Pancreas (tissue), 10 donors: ENCODE measurements at regions of chr10 and their contacts with region 1.

Region 1: GRCh38 chr10:29131952-29132820 is 156.7 kb upstream of the LYZL1 start:
- DNase-seq: peak in 2 of 6 donors; percentile 24
- ATAC-seq: peak in 3 of 4 donors; percentile 23 to 51 (median 43)
- H3K4me3 ChIP-seq: no peak overlapping the region
- H3K27ac ChIP-seq: no peak overlapping the region
- H3K4me1 ChIP-seq: no peaks in the 10 kb centered on the region
- H3K27me3 ChIP-seq: no peaks in the 10 kb centered on the region
- CTCF ChIP-seq: no peak

Region 2: DNA sequence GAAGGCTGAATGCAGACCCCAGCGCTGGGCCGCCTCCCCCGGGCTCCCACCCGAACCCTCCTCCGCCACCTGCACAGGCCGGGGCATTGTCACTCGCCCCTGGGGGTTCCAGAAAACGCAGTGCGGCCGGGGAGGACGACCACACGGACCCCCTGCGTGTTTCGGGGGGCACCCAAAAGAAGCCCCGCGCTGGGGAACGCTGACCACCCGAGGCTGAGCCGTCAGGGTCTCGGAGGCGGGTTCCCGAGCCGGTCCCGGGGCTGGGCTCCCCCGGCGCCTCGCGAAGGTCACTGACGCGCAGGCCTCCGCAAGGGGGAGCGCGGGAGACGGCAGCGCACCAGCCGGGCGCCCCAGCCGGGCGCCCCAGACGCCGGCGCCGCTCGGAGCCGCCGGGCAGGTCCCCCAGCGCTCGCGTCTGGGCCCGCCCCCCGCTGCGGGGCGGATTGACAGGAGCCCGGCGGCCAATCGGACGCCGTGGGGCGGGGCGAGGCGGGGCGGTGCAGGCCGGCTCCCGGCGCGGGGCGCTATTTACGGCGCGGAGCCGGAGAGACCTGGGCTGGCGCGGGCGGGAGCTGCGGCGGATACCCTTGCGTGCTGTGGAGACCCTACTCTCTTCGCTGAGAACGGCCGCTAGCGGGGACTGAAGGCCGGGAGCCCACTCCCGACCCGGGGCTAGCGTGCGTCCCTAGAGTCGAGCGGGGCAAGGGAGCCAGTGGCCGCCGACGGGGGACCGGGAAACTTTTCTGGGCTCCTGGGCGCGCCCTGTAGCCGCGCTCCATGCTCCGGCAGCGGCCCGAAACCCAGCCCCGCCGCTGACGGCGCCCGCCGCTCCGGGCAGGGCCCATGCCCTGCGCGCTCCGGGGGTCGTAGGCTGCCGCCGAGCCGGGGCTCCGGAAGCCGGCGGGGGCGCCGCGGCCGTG is 455.0 kb before region 1 on chr10 and contains the start of gene BAMBI:
- intact Hi-C with region 1: loop called in 1 of 3 experiments (anchors 5 kb)
- DNase-seq: peak; percentile 88 to 98 (median 93)
- ATAC-seq: peak; percentile 95 to 98 (median 98)
- H3K4me3 ChIP-seq: peak within 1 kb of the TSS; percentile 71 to 94 (median 82)
- H3K27ac ChIP-seq: peak within 1 kb of the TSS in 3 of 4 donors; percentile 68 to 79 (median 69)
- H3K4me1 ChIP-seq: no peaks in the 10 kb centered on the region
- H3K27me3 ChIP-seq: peaks cover 0 to 10% (median 0%) of the 10 kb centered on the region in 4 donors
- CTCF ChIP-seq: peak; percentile 21 to 57 (median 53)
- total RNA-seq, gene BAMBI: 2.3 to 7.9 (median 3.5) TPM